Mammary epithelial cell (primary cell): ENCODE measurements at regions of chr17 and their contacts with region 1.

Region 1: GRCh38 chr17:1783834-1784611 is 22.2 kb downstream of the SERPINF1 start:
- DNase-seq: peak; percentile 46
- H3K4me3 ChIP-seq: no peak overlapping the region
- H3K27ac ChIP-seq: peak overlapping the region; percentile 17
- H3K4me1 ChIP-seq: peaks cover 37% of the 10 kb centered on the region
- H3K27me3 ChIP-seq: no peaks in the 10 kb centered on the region
- CTCF ChIP-seq: peak; percentile 72 to 81

Region 2: DNA sequence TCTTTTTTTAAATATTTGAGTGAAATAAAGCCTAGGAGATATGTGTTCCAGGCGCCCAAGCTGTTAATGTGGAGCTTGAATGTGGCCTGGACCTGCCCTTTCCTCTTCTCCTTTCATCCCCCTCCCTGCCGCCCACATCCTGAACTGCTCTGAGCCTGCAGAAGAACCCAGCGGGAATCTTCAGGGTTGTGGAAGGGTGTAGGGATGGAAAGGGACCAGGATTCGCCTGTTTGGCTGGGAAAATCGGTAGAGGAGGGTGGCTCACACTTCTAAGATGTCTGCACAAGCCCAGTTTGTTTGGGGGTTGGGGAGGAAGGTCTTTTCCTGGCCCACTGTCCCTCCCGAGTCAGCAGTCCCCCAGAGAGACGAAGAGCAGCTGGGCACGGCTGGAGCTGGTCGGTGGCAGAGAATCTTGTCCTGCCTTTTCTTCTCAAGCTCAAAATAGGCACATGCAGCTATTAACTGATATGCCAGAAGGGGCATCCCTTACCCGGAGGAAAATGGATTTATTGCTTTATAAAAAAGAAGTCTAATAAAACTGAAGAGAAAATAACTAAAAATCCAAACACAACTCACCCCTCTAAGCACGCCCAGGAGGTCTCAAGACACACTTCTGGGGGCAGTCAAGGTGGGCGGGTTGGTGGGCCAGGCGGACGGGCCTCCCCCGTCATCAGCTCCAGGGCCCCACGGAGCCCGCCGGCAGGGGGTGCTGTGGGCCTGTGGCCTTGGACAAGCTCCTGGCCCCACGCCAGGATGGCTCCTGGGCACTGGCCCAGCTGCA is 209.9 kb before region 1 on chr17:
- CTCF ChIA-PET with region 1: no interaction called
- dilution Hi-C with region 1: no loop called
- in situ Hi-C with region 1: no loop called
- intact Hi-C with region 1: loop called (anchors 10 kb)
- DNase-seq: peak; percentile 63
- H3K4me3 ChIP-seq: no peak overlapping the region
- H3K27ac ChIP-seq: no peak overlapping the region
- H3K4me1 ChIP-seq: peaks cover 33% of the 10 kb centered on the region
- H3K27me3 ChIP-seq: no peaks in the 10 kb centered on the region
- CTCF ChIP-seq: peak; percentile 82 to 97

Region 3: GRCh38 chr17:1606352-1607033 is 177.5 kb before region 1 on chr17:
- CTCF ChIA-PET with region 1: no interaction called
- dilution Hi-C with region 1: no loop called
- in situ Hi-C with region 1: no loop called
- intact Hi-C with region 1: no loop called
- DNase-seq: no peak
- H3K4me3 ChIP-seq: no peak overlapping the region
- H3K27ac ChIP-seq: no peak overlapping the region
- H3K4me1 ChIP-seq: peaks cover 4% of the 10 kb centered on the region
- H3K27me3 ChIP-seq: no peaks in the 10 kb centered on the region
- CTCF ChIP-seq: no peak

Region 4: DNA sequence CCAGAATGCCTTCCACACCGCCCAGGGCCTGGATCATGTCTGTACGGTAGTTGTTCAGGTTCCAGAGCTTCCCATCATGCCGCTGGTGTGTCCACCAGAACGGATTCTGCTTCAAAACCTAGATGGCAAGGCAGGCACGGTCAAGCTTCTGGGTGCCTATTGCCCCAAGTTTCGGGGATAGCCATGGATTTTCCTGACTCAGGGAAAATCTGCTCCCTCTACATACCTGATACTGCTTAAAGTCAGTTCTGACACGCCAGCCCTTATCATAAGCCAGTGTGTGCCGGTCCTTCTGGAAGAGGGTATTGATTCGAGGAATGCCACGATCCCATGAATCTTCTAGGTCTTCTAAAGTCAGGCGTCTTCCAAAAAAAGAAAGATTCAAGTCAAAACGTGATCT is 123.0 kb before region 1 on chr17:
- CTCF ChIA-PET with region 1: no interaction called
- dilution Hi-C with region 1: loop called (anchors 5 kb)
- in situ Hi-C with region 1: no loop called
- intact Hi-C with region 1: no loop called
- DNase-seq: no peak
- H3K4me3 ChIP-seq: no peak overlapping the region
- H3K27ac ChIP-seq: no peak overlapping the region
- H3K4me1 ChIP-seq: no peaks in the 10 kb centered on the region
- H3K27me3 ChIP-seq: no peaks in the 10 kb centered on the region
- CTCF ChIP-seq: no peak

Region 5: DNA sequence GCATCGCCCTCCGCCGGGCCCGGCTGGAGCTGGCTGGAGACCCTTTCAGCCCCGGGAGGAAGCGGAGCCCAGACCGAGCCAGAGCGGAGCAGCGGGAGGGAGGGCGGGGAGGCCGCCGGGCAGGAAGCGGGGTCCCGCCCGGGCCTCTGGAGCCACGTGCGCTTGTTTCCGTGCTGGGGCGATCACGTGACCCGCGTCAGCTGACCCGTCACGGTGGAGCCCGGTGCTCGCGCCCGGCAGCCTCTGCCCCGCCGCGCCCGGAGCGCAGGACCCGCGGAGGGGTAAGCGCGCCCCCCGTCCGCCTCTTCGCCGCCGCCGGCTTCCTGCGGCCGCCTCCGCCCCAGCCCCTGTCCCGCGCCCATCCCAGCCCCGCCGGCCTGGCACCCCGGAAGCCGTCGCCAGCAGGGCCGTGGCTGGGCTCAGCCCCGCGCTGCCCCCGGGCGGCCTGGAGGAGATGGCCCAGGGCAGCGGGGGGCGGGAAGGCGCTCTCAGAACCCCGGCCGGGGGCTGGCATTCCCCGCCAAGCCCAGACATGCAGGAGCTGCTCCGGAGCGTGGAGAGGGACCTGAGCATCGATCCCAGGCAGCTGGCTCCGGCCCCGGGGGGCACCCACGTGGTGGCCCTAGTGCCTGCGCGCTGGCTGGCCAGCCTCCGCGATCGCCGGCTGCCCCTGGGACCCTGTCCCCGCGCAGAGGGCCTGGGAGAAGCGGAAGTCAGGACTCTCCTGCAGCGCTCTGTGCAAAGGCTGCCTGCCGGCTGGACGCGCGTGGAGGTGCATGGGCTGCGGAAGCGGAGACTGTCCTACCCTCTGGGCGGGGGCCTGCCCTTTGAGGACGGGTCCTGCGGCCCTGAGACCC is 59.3 kb before region 1 on chr17 and contains the start of gene WDR81:
- CTCF ChIA-PET with region 1: interaction called, 10 read pairs
- dilution Hi-C with region 1: no loop called
- in situ Hi-C with region 1: loop called (anchors 5 kb)
- intact Hi-C with region 1: loop called (anchors 1 kb)
- DNase-seq: peak; percentile 46
- H3K4me3 ChIP-seq: peak within 1 kb of the TSS; percentile 39 to 60 (median 56)
- H3K27ac ChIP-seq: peak within 1 kb of the TSS; percentile 26
- H3K4me1 ChIP-seq: peaks cover 41% of the 10 kb centered on the region
- H3K27me3 ChIP-seq: no peaks in the 10 kb centered on the region
- CTCF ChIP-seq: no peak
- total RNA-seq, gene WDR81: 17.8 to 35.5 TPM

Region 6: DNA sequence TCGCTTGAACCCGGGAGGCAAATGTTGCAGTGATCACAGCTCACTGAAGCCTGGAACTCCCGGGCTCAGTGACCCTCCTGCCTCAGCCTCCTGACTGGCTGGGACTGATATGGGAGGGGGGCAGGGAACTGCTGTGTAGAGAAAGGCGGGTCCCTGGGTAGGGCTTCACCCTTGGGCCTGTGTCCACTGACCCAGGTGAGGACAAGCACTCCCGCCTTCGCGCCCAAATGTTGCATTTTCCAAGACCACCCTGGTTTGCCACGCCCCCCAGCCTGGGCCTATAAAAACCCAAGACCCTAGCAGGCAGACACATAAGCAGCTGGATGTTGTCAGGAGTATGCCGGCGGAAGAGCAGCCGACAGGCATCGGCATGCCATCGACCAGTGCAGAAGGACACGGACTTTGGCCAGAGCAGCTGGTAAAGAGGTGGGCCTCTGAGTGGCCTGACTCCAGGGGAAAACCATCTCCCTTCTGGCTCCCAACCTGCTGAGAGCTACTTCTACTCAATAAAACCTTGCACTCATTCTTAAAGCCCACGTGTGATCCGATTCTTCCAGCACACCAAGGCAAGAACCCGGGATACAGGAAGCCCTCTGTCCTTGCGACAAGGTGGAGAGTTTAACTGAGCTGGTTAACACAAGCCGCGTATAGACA is 26.6 kb after region 1 on chr17:
- CTCF ChIA-PET with region 1: no interaction called
- dilution Hi-C with region 1: no loop called
- in situ Hi-C with region 1: no loop called
- intact Hi-C with region 1: no loop called
- DNase-seq: no peak
- H3K4me3 ChIP-seq: no peak overlapping the region
- H3K27ac ChIP-seq: no peak overlapping the region
- H3K4me1 ChIP-seq: no peaks in the 10 kb centered on the region
- H3K27me3 ChIP-seq: no peaks in the 10 kb centered on the region
- CTCF ChIP-seq: no peak

Region 7: GRCh38 chr17:2025622-2026310 is 241.7 kb after region 1 on chr17:
- CTCF ChIA-PET with region 1: no interaction called
- dilution Hi-C with region 1: no loop called
- in situ Hi-C with region 1: no loop called
- intact Hi-C with region 1: no loop called
- DNase-seq: peak; percentile 60
- H3K4me3 ChIP-seq: peak overlapping the region; percentile 53 to 57 (median 53)
- H3K27ac ChIP-seq: no peak overlapping the region
- H3K4me1 ChIP-seq: peaks cover 21% of the 10 kb centered on the region
- H3K27me3 ChIP-seq: peaks cover 10% of the 10 kb centered on the region
- CTCF ChIP-seq: peak; percentile 59 to 91